ENCODE measurements at regions of chr15 and their contacts with region 1.

Region 1: GRCh38 chr15:78638658-78639314 is 2.2 kb downstream of the CHRNB4 start:
- DNase-seq: peak; percentile 78
- ATAC-seq: peak; percentile 65
- H3K4me3 Mint-ChIP-seq: no peak overlapping the region
- H3K27ac Mint-ChIP-seq: no peak overlapping the region
- H3K4me1 Mint-ChIP-seq: peaks cover 8% of the 10 kb centered on the region
- H3K27me3 Mint-ChIP-seq: peaks cover 19% of the 10 kb centered on the region

Region 2: GRCh38 chr15:78709263-78709882 is 70.6 kb after region 1 on chr15:
- CTCF ChIA-PET with region 1: interaction called, 33 read pairs
- POLR2A ChIA-PET with region 1: no interaction called
- intact Hi-C with region 1: loop called (anchors 1 kb)
- DNase-seq: peak; percentile 84
- ATAC-seq: peak; percentile 98
- H3K4me3 Mint-ChIP-seq: no peak overlapping the region
- H3K27ac Mint-ChIP-seq: no peak overlapping the region
- H3K4me1 Mint-ChIP-seq: no peaks in the 10 kb centered on the region
- H3K27me3 Mint-ChIP-seq: peaks cover 27% of the 10 kb centered on the region

Measured in activated CD4-positive, alpha-beta T cell treated with anti-CD3 and anti-CD28 coated beads for 36 hours (primary cell).